MCF 10A (cell line): ENCODE measurements at regions of chr18 and their contacts with region 1.

Region 1: DNA sequence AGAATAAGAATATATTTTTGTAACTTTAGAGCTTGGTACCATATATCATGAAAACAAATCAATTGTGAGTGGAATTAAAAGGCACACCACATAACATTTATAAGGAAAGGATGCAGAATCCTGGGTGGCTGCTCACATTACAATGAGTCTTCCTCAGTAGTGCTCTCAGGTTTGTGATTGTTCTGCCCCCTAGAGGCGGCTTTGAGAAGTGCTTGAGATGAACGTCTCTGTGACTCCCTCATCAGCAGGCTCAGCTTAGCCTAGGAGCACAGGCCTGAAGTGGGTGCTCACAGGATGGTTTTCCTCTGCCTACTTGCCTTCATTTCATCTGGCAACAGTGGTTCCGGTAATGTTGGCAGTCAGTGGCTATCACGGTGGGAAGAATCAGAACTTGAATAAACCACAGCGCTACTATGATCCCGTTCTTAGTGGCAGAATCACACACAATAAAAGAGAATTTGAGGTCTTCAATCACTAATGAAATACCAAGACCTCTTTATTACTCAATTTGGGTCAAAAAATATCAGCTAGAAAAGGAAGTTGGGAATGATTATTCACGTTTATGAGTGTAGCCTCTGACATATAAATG is 38.1 kb upstream of the B4GALT6 start:
- DNase-seq: peak; percentile 89
- H3K4me3 Mint-ChIP-seq: no peak overlapping the region
- H3K27ac Mint-ChIP-seq: no peak overlapping the region
- H3K4me1 Mint-ChIP-seq: no peaks in the 10 kb centered on the region
- H3K27me3 Mint-ChIP-seq: no peaks in the 10 kb centered on the region
- CTCF ChIP-seq: peak; percentile 84

Region 2: DNA sequence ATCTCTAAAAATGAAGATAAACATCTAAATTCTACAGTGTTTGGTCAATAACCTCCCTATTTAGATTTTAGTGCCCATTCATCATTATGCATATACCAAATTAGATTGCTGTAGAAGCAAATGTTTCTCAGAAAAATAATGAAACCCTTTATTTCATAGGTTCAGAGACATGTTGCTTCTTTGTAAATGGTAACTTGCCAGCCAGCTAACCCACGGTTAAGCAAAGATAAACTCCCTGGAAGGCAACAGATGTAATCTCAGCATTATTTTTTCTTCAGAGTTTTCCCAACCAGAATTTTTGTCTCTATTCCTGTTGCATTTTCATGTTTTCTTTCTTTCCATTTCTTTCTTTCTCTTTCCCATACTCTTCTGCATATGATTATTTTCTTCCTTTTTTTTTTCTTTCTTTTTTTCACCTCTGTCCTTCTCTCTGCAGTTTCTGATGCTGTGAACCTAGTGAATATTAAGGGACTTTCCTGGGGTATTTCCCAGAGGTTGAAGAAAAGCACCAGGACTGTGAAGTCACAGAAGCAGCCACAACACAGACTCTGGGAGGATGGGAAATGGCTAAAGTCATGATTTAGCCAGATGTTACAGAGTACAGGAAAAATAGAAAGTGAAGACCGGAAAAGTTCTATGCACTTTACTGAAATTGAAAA is 454.5 kb before region 1 on chr18:
- CTCF ChIA-PET with region 1: no interaction called
- POLR2A ChIA-PET with region 1: no interaction called
- intact Hi-C with region 1: loop called (anchors 5 kb)
- DNase-seq: no peak
- H3K4me3 Mint-ChIP-seq: peak overlapping the region; percentile 12
- H3K27ac Mint-ChIP-seq: peak overlapping the region; percentile 84
- H3K4me1 Mint-ChIP-seq: peaks cover 28% of the 10 kb centered on the region
- H3K27me3 Mint-ChIP-seq: no peaks in the 10 kb centered on the region
- CTCF ChIP-seq: no peak

Region 3: DNA sequence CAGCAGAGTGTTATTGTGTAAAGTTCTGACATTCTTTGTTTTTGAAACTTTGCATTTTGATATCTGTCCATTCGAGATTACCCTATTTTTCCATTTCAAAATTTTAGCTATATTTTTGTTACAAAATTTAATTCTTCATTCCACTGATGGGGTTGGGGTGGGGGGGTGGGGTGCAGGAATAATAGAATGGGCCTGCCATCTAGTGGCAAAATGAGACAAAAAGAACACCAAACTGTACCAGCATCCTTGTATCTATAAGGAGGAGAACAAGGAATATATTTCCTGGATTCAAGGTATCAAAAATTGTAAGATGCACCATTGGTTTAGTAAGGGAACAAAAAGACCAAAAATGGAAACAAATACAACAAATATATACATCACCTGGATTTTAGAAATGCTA is 158.7 kb before region 1 on chr18:
- CTCF ChIA-PET with region 1: interaction called, 93 read pairs
- POLR2A ChIA-PET with region 1: no interaction called
- intact Hi-C with region 1: loop called (anchors 2 kb)
- DNase-seq: peak; percentile 24
- H3K4me3 Mint-ChIP-seq: no peak overlapping the region
- H3K27ac Mint-ChIP-seq: no peak overlapping the region
- H3K4me1 Mint-ChIP-seq: no peaks in the 10 kb centered on the region
- H3K27me3 Mint-ChIP-seq: no peaks in the 10 kb centered on the region
- CTCF ChIP-seq: peak; percentile 42

Region 4: GRCh38 chr18:31603315-31603714 is 119.1 kb before region 1 on chr18:
- CTCF ChIA-PET with region 1: no interaction called
- POLR2A ChIA-PET with region 1: no interaction called
- intact Hi-C with region 1: no loop called
- DNase-seq: peak; percentile 25
- H3K4me3 Mint-ChIP-seq: no peak overlapping the region
- H3K27ac Mint-ChIP-seq: no peak overlapping the region
- H3K4me1 Mint-ChIP-seq: peaks cover 5% of the 10 kb centered on the region
- H3K27me3 Mint-ChIP-seq: no peaks in the 10 kb centered on the region
- CTCF ChIP-seq: no peak

Region 5: GRCh38 chr18:31701744-31702143 is 20.7 kb before region 1 on chr18:
- CTCF ChIA-PET with region 1: interaction called, 10 read pairs
- POLR2A ChIA-PET with region 1: no interaction called
- intact Hi-C with region 1: no loop called
- DNase-seq: no peak
- H3K4me3 Mint-ChIP-seq: no peak overlapping the region
- H3K27ac Mint-ChIP-seq: no peak overlapping the region
- H3K4me1 Mint-ChIP-seq: no peaks in the 10 kb centered on the region
- H3K27me3 Mint-ChIP-seq: no peaks in the 10 kb centered on the region
- CTCF ChIP-seq: no peak

Region 6: DNA sequence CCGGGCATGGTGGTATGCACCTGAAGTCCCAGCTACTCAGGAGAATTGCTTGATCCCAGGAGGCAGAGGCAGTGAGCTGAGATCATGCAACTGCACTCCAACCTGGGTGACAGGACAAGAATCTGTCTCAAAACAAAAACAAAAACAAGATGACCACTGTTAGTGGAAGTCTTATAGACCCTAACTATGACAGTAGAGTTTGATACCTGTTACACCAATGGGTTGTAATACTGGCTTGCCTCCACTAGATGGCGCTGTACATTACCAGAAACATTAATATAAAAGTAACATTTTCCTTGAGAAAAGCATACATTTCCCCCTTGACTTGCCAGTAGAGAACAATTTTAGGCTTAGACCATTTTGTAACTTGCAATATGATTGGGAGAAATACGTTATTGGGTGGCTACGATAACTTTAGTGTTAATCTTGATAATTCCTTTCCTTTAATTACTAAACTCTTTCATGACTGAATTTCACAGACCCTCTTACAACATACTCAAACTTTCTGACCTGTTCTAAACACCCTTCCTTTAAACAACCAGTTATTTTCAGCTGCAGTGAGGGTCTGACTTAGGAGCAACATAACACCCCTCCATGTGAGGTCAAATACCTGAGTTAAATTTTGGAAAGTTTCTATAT is 18.8 kb after region 1 on chr18:
- CTCF ChIA-PET with region 1: interaction called, 44 read pairs
- POLR2A ChIA-PET with region 1: no interaction called
- intact Hi-C with region 1: no loop called
- DNase-seq: peak; percentile 59
- H3K4me3 Mint-ChIP-seq: no peak overlapping the region
- H3K27ac Mint-ChIP-seq: no peak overlapping the region
- H3K4me1 Mint-ChIP-seq: no peaks in the 10 kb centered on the region
- H3K27me3 Mint-ChIP-seq: no peaks in the 10 kb centered on the region
- CTCF ChIP-seq: peak; percentile 81

Region 7: GRCh38 chr18:31819106-31819924 is 96.9 kb after region 1 on chr18:
- CTCF ChIA-PET with region 1: interaction called, 20 read pairs
- POLR2A ChIA-PET with region 1: no interaction called
- intact Hi-C with region 1: loop called (anchors 1 kb)
- DNase-seq: peak; percentile 62
- H3K4me3 Mint-ChIP-seq: no peak overlapping the region
- H3K27ac Mint-ChIP-seq: no peak overlapping the region
- H3K4me1 Mint-ChIP-seq: peaks cover 6% of the 10 kb centered on the region
- H3K27me3 Mint-ChIP-seq: no peaks in the 10 kb centered on the region
- CTCF ChIP-seq: peak; percentile 58